HepG2 (cell line): ENCODE measurements at regions of chr3 and their contacts with region 1.

Region 1: DNA sequence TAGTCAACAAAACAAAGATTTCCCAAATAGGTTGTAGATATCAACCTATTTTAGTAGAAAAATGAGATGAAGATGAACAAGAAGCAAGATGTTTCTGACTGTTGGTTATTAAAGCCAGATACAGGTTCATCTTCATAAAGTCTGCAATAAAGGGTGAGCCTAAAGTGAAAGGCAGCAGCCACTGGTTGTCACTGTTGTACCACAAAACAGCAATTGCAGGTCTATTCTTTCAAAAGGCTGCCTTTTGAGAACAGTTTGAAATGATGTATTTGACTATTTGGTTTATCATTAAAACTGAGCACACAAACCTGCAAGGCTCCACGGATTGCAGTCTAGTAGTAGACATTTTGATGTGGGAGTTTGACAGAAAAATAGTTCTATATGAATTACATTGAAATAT is 543.4 kb downstream of the GBE1 start:
- DNase-seq: peak; percentile 23
- ATAC-seq: peak; percentile 82
- H3K4me3 ChIP-seq: no peak overlapping the region
- H3K27ac ChIP-seq: no peak overlapping the region
- H3K4me1 ChIP-seq: no peaks in the 10 kb centered on the region
- H3K27me3 ChIP-seq: no peaks in the 10 kb centered on the region; a peak in 1 of 5 replicates
- CTCF ChIP-seq: peak; percentile 80
- EP300 ChIP-seq: no peak
- POLR2A ChIP-seq: no peak
- RAD21 ChIP-seq: peak; percentile 67

Region 2: GRCh38 chr3:81237181-81237580 is 19.2 kb after region 1 on chr3:
- CTCF ChIA-PET with region 1: no interaction called
- POLR2A ChIA-PET with region 1: no interaction called
- in situ Hi-C with region 1: no loop called
- intact Hi-C with region 1: no loop called
- DNase-seq: no peak
- ATAC-seq: no peak
- H3K4me3 ChIP-seq: no peak overlapping the region
- H3K27ac ChIP-seq: no peak overlapping the region
- H3K4me1 ChIP-seq: no peaks in the 10 kb centered on the region
- H3K27me3 ChIP-seq: no peaks in the 10 kb centered on the region
- CTCF ChIP-seq: no peak
- EP300 ChIP-seq: no peak
- POLR2A ChIP-seq: no peak
- RAD21 ChIP-seq: no peak

Region 3: DNA sequence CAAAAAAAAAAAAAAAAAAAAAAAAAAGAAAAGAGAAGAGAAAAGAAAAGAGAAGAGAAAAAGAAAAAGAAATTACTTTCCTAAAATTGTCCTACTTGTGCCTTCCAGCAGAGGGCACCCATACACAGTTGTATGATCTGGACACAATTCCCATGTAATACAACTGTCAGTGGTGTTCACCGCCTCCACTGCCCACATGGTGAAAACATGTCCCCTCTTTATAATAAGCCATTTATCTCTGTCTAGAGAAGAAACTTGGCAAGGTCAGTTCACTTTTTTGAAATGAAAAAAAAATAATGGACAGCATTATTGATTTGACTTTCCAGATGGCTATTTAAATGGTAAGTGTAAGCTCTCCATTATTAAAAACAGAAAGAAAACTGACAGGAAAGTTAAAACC is 84.0 kb after region 1 on chr3:
- CTCF ChIA-PET with region 1: no interaction called
- POLR2A ChIA-PET with region 1: no interaction called
- in situ Hi-C with region 1: no loop called
- intact Hi-C with region 1: loop called (anchors 2 kb)
- DNase-seq: peak; percentile 48
- ATAC-seq: peak; percentile 59
- H3K4me3 ChIP-seq: no peak overlapping the region
- H3K27ac ChIP-seq: no peak overlapping the region
- H3K4me1 ChIP-seq: peaks cover 28% of the 10 kb centered on the region
- H3K27me3 ChIP-seq: peaks cover 0 to 9% of the 10 kb centered on the region in 2 experiments; a peak in 1 of 5 replicates
- CTCF ChIP-seq: peak; percentile 70
- EP300 ChIP-seq: no peak
- POLR2A ChIP-seq: no peak
- RAD21 ChIP-seq: 0 out of 2 replicates have a peak, but pooled peaks have one; percentile 26

Region 4: GRCh38 chr3:81419228-81419627 is 201.2 kb after region 1 on chr3:
- CTCF ChIA-PET with region 1: no interaction called
- POLR2A ChIA-PET with region 1: no interaction called
- in situ Hi-C with region 1: no loop called
- intact Hi-C with region 1: loop called (anchors 1 kb)
- DNase-seq: peak; percentile 1
- ATAC-seq: no peak
- H3K4me3 ChIP-seq: no peak overlapping the region
- H3K27ac ChIP-seq: no peak overlapping the region
- H3K4me1 ChIP-seq: no peaks in the 10 kb centered on the region
- H3K27me3 ChIP-seq: no peaks in the 10 kb centered on the region
- CTCF ChIP-seq: peak; percentile 40
- EP300 ChIP-seq: no peak
- POLR2A ChIP-seq: no peak
- RAD21 ChIP-seq: no peak